ENCODE measurements at regions of chr17 and their contacts with region 1.

Region 1: GRCh38 chr17:44385287-44386181 is 3.9 kb downstream of the ITGA2B start:
- DNase-seq: peak; percentile 75 to 90 (median 77)
- ATAC-seq: peak; percentile 59 to 91 (median 86)
- H3K4me3 ChIP-seq: peak overlapping the region; percentile 25 to 63 (median 56)
- H3K27ac ChIP-seq: no peak overlapping the region
- H3K4me1 ChIP-seq: peaks cover 0 to 23% (median 13%) of the 10 kb centered on the region in 12 donors
- H3K27me3 ChIP-seq: peaks cover 0 to 21% (median 4%) of the 10 kb centered on the region in 9 donors
- CTCF ChIP-seq: peak in 3 of 12 donors; percentile 20 to 26 (median 21)
- POLR2A ChIP-seq: peak in 1 of 2 donors; percentile 28

Region 2: GRCh38 chr17:44444735-44445105 is 59.2 kb after region 1 on chr17:
- intact Hi-C with region 1: loop called in 1 of 10 experiments (anchors 10 kb)
- DNase-seq: no peak
- ATAC-seq: no peak
- H3K4me3 ChIP-seq: no peak overlapping the region
- H3K27ac ChIP-seq: no peak overlapping the region
- H3K4me1 ChIP-seq: peaks cover 0 to 9% (median 0%) of the 10 kb centered on the region in 12 donors
- H3K27me3 ChIP-seq: no peaks in the 10 kb centered on the region
- CTCF ChIP-seq: no peak
- POLR2A ChIP-seq: no peak